ENCODE measurements at regions of chr11 and their contacts with region 1.

Region 1: GRCh38 chr11:119363851-119364590 is 17.5 kb downstream of the USP2 start:
- DNase-seq: peak; percentile 82
- CTCF ChIP-seq: no peak

Region 2: GRCh38 chr11:119381181-119381988 is 17.4 kb after region 1 on chr11 and contains the start of gene USP2:
- CTCF ChIA-PET with region 1: interaction called, 159 read pairs
- POLR2A ChIA-PET with region 1: no interaction called
- DNase-seq: peak; percentile 95
- CTCF ChIP-seq: peak; percentile 89